Activated naive CD4-positive, alpha-beta T cell treated with anti-CD3 and anti-CD28 coated beads for 36 hours (primary cell): ENCODE measurements at regions of chr13 and their contacts with region 1.

Region 1: DNA sequence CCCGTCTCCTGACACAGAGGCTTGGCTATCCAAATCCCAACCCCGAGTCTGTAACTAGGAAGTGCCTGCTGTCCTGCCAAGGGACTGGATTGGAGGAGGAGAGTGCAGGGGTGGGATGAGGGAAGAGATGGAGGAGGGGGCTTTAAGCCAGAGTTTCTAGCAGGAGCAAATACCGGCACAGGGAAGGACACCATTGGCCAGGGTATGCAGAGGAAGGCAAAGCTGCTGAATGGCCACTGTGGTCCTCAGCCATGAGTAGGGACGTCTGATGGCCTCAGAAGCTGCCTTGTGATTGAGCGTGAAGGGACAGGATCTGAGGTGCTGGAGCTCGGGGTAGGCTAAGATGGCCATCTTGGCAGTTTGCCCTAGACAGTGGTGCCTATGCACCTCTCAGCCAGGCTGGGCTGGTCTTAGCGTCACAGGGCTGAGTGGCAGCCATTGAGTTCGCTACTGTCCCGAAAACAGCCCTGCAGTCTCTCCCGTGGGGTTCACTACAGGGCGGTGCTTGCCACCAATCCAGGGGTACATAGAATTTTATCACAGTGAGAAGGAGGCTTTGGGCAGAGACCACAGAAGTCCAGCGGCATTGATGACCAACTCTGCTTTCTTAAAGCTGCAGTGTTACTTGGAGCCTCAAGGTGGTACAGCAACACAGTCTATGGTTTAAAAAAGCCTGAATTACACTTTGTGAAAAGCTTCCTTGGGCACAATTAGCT is 61.8 kb downstream of the AKAP11 start:
- DNase-seq: no peak
- H3K4me3 Mint-ChIP-seq: no peak overlapping the region
- H3K27ac Mint-ChIP-seq: no peak overlapping the region
- H3K4me1 Mint-ChIP-seq: peaks cover 27% of the 10 kb centered on the region
- H3K27me3 Mint-ChIP-seq: no peaks in the 10 kb centered on the region

Region 2: DNA sequence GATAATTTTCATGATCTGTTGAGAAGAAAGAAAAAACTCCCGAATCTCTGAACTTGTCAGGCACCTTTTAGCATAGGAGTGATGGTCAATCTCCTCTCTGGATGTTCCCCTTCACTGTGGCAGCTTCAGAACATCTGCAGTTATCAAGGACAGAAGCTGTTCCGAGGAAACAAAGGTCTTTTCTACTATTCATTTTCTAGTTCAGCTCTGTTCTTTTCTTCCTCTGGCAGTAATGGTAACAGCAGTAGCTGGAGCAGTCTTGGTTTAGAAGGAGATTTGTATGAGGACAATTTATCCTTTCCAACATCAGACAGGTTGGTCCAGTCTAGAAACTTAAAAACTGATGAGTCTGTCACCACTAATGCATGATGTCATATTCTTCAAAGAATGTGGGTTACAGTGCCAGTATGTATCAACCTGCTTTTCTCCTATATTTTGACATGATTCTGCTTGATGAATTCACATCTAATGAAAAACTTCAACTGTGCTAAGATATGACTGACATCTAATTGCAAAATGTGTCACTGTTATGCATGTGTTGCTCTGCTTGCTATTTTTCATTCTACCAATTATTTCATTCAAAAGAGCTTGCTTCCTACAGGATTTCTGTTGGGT is 20.8 kb before region 1 on chr13:
- CTCF ChIA-PET with region 1: no interaction called
- intact Hi-C with region 1: no loop called
- DNase-seq: no peak
- H3K4me3 Mint-ChIP-seq: no peak overlapping the region
- H3K27ac Mint-ChIP-seq: no peak overlapping the region
- H3K4me1 Mint-ChIP-seq: peaks cover 27% of the 10 kb centered on the region
- H3K27me3 Mint-ChIP-seq: no peaks in the 10 kb centered on the region

Region 3: DNA sequence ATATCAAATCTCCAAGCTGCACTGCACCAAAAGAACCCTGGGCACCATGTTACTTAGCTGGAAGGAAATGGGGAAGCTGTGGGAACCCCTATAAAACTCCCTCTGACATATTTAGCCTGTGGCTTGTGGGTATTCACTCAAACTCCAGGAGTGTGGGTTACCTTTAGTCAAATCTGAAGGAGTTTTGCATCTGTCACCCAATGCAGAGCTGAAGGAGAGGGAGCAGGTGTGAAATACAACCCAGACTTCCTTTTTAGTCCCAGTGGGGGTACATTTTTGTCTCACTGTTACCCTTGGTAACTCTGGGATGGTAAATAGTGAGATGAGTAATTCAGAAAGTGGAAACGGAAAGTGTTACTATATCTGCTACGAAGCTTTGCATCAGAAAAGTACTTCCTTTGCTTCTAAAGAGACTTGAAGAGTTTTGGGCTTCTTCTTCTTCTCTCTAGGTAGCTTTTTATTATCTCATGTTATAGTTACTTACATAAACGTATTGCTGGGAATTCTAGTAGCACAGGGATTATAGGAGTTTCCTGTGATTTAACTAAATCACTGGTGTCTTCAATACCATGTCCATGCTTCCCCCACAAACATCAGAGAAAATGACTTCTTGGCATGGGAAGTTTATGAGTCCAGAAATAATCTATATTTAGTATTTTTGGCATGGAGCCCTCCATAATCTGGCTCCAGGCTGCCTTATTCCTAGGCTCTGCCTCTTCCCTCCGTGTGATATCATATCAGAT is 44.0 kb after region 1 on chr13:
- CTCF ChIA-PET with region 1: interaction called, 4 read pairs
- intact Hi-C with region 1: loop called (anchors 1 kb)
- DNase-seq: peak; percentile 71
- H3K4me3 Mint-ChIP-seq: no peak overlapping the region
- H3K27ac Mint-ChIP-seq: peak overlapping the region; percentile 95
- H3K4me1 Mint-ChIP-seq: peaks cover 59% of the 10 kb centered on the region
- H3K27me3 Mint-ChIP-seq: no peaks in the 10 kb centered on the region

Region 4: DNA sequence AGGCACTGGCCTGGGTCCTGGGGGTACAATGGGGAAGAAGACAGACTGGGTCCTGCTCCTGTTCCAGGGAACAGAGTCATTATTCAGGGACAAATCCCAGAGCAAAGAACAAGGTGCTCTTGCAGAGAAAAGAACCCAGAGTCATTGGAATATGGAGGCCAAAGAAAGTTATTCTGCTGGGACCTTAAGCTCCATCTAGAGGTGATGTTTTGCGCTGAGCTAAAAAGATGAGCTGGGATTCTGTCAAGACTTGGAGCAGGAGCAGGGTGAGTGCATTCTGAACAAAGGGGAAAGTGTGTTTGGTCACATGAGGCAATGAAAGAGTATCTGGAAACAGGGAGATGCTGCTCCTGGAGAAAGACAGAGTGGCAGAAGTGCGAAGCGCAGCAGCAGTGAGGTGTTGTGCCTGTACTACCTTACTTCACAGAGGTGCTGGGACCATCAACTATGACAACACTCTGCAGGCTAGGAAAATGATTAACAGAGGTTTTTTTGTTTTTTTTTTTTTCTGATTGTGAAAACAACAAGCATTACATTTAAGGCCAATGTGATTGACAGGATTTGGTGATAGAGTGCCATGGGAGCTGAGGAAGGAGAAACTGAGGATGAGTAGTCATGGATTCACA is 144.9 kb after region 1 on chr13:
- CTCF ChIA-PET with region 1: interaction called, 20 read pairs
- intact Hi-C with region 1: loop called (anchors 1 kb)
- DNase-seq: no peak
- H3K4me3 Mint-ChIP-seq: no peak overlapping the region
- H3K27ac Mint-ChIP-seq: no peak overlapping the region
- H3K4me1 Mint-ChIP-seq: peaks cover 17% of the 10 kb centered on the region
- H3K27me3 Mint-ChIP-seq: no peaks in the 10 kb centered on the region

Region 5: GRCh38 chr13:42574435-42575311 is 240.9 kb after region 1 on chr13:
- CTCF ChIA-PET with region 1: no interaction called
- intact Hi-C with region 1: loop called (anchors 5 kb)
- DNase-seq: peak; percentile 62
- H3K4me3 Mint-ChIP-seq: peak overlapping the region; percentile 76
- H3K27ac Mint-ChIP-seq: peak overlapping the region; percentile 8
- H3K4me1 Mint-ChIP-seq: peaks cover 27% of the 10 kb centered on the region
- H3K27me3 Mint-ChIP-seq: peaks cover 27% of the 10 kb centered on the region

Region 6: DNA sequence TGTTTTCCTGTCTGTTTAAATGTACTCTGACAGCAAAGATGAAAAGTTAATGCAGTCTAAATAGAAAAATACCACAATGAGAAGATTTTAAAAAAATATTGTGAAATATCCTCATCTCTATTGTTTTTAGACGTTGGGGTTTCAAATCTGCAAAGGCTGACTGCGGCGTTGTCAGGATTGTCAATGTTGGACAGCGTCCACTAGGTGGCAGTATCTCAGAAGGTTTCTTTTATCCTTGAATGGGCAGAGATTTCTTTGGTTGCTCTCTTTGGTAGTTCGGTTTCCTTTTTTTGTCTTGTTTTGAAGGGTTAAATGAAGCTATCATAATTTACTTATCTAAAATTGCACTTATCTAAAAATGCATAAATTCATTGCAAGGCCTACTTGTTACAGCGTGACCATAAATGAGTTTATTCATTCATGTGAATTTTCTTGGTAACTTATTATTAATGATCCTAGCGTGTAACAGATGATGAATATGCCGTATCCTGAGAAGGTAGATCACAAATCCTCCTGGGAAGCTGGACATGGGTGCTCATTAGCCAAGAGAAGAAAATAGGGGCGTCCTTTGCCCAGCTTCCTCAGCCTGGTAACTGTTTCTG is 261.3 kb after region 1 on chr13:
- CTCF ChIA-PET with region 1: interaction called, 13 read pairs
- intact Hi-C with region 1: loop called (anchors 1 kb)
- DNase-seq: peak; percentile 73
- H3K4me3 Mint-ChIP-seq: no peak overlapping the region
- H3K27ac Mint-ChIP-seq: no peak overlapping the region
- H3K4me1 Mint-ChIP-seq: no peaks in the 10 kb centered on the region
- H3K27me3 Mint-ChIP-seq: no peaks in the 10 kb centered on the region

Region 7: DNA sequence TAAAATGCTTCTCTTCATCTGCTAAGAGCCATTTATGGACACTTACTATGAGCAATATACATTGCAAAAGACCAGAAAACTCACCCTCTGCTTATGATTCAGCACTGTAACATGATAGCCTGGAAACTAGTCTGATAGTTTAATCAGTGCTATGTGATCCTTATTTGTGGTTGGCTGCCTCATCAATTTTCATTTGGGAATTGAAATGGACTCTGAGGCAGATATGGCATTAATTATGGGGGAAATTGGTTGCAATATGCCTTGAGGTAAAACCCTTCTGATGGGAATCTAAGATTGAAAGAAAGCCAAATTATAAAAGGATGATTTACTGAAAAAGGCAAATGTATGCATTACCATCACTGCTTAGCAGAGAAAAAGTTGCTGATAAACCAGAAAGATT is 481.1 kb after region 1 on chr13:
- CTCF ChIA-PET with region 1: no interaction called
- intact Hi-C with region 1: loop called (anchors 10 kb)
- DNase-seq: no peak
- H3K4me3 Mint-ChIP-seq: no peak overlapping the region
- H3K27ac Mint-ChIP-seq: no peak overlapping the region
- H3K4me1 Mint-ChIP-seq: no peaks in the 10 kb centered on the region
- H3K27me3 Mint-ChIP-seq: peaks cover 23% of the 10 kb centered on the region